Activated naive CD4-positive, alpha-beta T cell treated with anti-CD3 and anti-CD28 coated beads for 36 hours (primary cell): ENCODE measurements at regions of chr4 and their contacts with region 1.

Region 1: GRCh38 chr4:48307528-48307927 is 33.8 kb upstream of the SLAIN2 start:
- DNase-seq: no peak
- H3K4me3 Mint-ChIP-seq: no peak overlapping the region
- H3K27ac Mint-ChIP-seq: no peak overlapping the region
- H3K4me1 Mint-ChIP-seq: no peaks in the 10 kb centered on the region
- H3K27me3 Mint-ChIP-seq: no peaks in the 10 kb centered on the region

Region 2: GRCh38 chr4:48247142-48247877 is 60.2 kb before region 1 on chr4:
- CTCF ChIA-PET with region 1: no interaction called
- intact Hi-C with region 1: loop called (anchors 10 kb)
- DNase-seq: no peak
- H3K4me3 Mint-ChIP-seq: no peak overlapping the region
- H3K27ac Mint-ChIP-seq: no peak overlapping the region
- H3K4me1 Mint-ChIP-seq: peaks cover 3% of the 10 kb centered on the region
- H3K27me3 Mint-ChIP-seq: no peaks in the 10 kb centered on the region